ENCODE measurements at regions of chr6 and their contacts with region 1.

Region 1: DNA sequence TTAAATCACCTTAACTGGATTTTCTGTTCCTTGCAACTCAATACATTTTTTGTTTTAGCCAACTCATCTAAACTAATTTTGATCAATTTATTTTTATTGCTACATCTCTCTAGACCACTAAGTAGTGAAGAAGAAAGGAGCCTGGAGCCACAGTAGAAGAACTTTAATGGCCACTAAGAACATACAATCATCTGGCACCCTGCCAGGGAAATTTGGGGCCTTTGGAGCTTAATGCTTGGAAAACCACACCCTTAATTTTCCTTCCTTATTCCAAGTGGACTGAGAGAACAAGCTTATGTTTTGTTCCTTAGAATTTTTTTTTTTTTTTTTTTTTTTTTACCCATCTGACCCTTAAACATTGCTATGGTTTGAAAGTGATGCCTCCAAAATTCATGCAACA is 12.0 kb upstream of the GMDS start:
- DNase-seq: no peak
- ATAC-seq: no peak
- H3K4me3 ChIP-seq: no peak overlapping the region
- H3K4me3 Mint-ChIP-seq: no peak overlapping the region
- H3K27ac ChIP-seq: no peak overlapping the region
- H3K27ac Mint-ChIP-seq: no peak overlapping the region
- H3K4me1 ChIP-seq: no peaks in the 10 kb centered on the region
- H3K4me1 Mint-ChIP-seq: no peaks in the 10 kb centered on the region
- H3K27me3 ChIP-seq: no peaks in the 10 kb centered on the region
- H3K27me3 Mint-ChIP-seq: no peaks in the 10 kb centered on the region
- CTCF ChIP-seq: no peak

Region 2: DNA sequence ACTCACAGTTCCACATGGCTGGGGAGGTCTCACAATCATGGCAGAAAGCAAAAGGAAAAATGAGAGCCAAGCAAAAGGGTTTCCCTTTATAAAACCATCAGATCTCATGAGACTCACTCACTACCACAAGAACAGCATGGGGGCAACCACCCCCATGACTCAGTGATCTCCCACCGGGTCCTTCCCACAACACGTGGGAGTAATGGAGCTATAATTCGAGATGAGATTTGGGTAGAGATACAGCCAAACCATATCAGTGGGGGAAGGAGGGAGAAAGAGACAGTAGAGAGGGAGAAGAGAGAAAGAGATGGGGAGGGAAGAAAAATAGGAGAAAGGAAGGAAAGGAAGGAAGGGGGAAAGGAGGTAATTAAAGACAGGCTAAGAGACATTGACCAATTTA is 42.0 kb before region 1 on chr6:
- CTCF ChIA-PET with region 1: no interaction called
- POLR2A ChIA-PET with region 1: no interaction called
- intact Hi-C with region 1: loop called in 1 of 2 experiments (anchors 5 kb)
- DNase-seq: no peak
- ATAC-seq: no peak
- H3K4me3 ChIP-seq: no peak overlapping the region
- H3K4me3 Mint-ChIP-seq: no peak overlapping the region
- H3K27ac ChIP-seq: no peak overlapping the region
- H3K27ac Mint-ChIP-seq: no peak overlapping the region
- H3K4me1 ChIP-seq: no peaks in the 10 kb centered on the region
- H3K4me1 Mint-ChIP-seq: peaks cover 3% of the 10 kb centered on the region
- H3K27me3 ChIP-seq: no peaks in the 10 kb centered on the region
- H3K27me3 Mint-ChIP-seq: no peaks in the 10 kb centered on the region
- CTCF ChIP-seq: no peak

Region 3: GRCh38 chr6:2448820-2449571 is 191.6 kb after region 1 on chr6:
- CTCF ChIA-PET with region 1: no interaction called
- POLR2A ChIA-PET with region 1: no interaction called
- intact Hi-C with region 1: no loop called
- DNase-seq: peak in 2 of 9 experiments; percentile 37 to 47
- ATAC-seq: no peak
- H3K4me3 ChIP-seq: no peak overlapping the region
- H3K4me3 Mint-ChIP-seq: peak overlapping the region; percentile 60
- H3K27ac ChIP-seq: no peak overlapping the region
- H3K27ac Mint-ChIP-seq: no peak overlapping the region
- H3K4me1 ChIP-seq: no peaks in the 10 kb centered on the region
- H3K4me1 Mint-ChIP-seq: peaks cover 5% of the 10 kb centered on the region
- H3K27me3 ChIP-seq: no peaks in the 10 kb centered on the region
- H3K27me3 Mint-ChIP-seq: no peaks in the 10 kb centered on the region
- CTCF ChIP-seq: no peak

Measured in CD8-positive, alpha-beta T cell (primary cell).